Breast epithelium (tissue), 4 donors: ENCODE measurements at regions of chr14 and their contacts with region 1.

Region 1: GRCh38 chr14:75609606-75610471 is 31.4 kb downstream of the FLVCR2 start:
- DNase-seq: peak in 1 of 2 donors; percentile 20
- H3K4me3 ChIP-seq: no peak overlapping the region
- H3K27ac ChIP-seq: peak overlapping the region in 1 of 2 donors; percentile 25
- H3K4me1 ChIP-seq: no peaks in the 10 kb centered on the region
- H3K27me3 ChIP-seq: no peaks in the 10 kb centered on the region
- CTCF ChIP-seq: no peak
- POLR2A ChIP-seq: no peak

Region 2: DNA sequence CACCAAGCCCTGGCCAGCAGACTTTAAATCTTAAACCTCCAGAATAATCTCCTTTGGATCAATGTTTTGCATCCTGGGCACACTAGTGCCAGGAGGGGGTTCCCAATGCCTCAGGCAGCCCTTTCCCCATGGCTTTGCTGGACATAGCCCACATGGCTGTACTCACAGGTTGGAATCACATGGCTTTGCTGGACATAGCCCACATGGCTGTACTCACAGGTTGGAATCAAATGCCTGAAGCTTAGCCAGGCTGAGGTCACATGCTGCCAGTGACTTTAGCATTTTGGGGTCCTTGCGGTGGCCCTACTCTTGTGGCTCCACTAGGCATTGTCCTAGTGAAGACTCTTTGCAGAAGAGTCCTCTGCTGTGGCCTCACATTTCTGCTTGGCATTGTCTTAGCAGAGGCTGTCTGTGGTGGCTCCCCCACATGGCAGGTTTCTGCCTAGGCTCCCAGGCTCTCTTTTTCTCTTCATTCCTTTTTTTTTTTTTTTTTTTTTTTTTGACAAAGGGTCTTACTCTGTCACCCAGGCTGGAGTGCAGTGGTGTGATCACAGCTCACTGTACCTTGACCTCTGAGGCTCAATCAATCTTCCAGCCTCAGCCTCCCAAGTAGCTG is 18.4 kb before region 1 on chr14:
- intact Hi-C with region 1: loop called (anchors 1 kb)
- DNase-seq: no peak
- H3K4me3 ChIP-seq: no peak overlapping the region
- H3K27ac ChIP-seq: no peak overlapping the region
- H3K4me1 ChIP-seq: no peaks in the 10 kb centered on the region
- H3K27me3 ChIP-seq: no peaks in the 10 kb centered on the region
- CTCF ChIP-seq: no peak
- POLR2A ChIP-seq: no peak